Activated CD8-positive, alpha-beta memory T cell treated with anti-CD3 and anti-CD28 coated beads, Interleukin-2, amount 10 ng/mL, durations not matched to agents 7 days and 5 days (primary cell): ENCODE measurements at regions of chr1 and their contacts with region 1.

Region 1: GRCh38 chr1:150529017-150529416 is 13.5 kb downstream of the FALEC start:
- DNase-seq: no peak
- ATAC-seq: no peak
- H3K4me3 Mint-ChIP-seq: no peak overlapping the region
- H3K27ac Mint-ChIP-seq: no peak overlapping the region
- H3K4me1 Mint-ChIP-seq: no peaks in the 10 kb centered on the region
- H3K27me3 Mint-ChIP-seq: no peaks in the 10 kb centered on the region

Region 2: GRCh38 chr1:150321826-150322166 is 207.2 kb before region 1 on chr1:
- CTCF ChIA-PET with region 1: no interaction called
- DNase-seq: peak; percentile 41
- ATAC-seq: peak; percentile 3
- H3K4me3 Mint-ChIP-seq: peak overlapping the region; percentile 94
- H3K27ac Mint-ChIP-seq: peak overlapping the region; percentile 97
- H3K4me1 Mint-ChIP-seq: peaks cover 33% of the 10 kb centered on the region
- H3K27me3 Mint-ChIP-seq: no peaks in the 10 kb centered on the region

Region 3: DNA sequence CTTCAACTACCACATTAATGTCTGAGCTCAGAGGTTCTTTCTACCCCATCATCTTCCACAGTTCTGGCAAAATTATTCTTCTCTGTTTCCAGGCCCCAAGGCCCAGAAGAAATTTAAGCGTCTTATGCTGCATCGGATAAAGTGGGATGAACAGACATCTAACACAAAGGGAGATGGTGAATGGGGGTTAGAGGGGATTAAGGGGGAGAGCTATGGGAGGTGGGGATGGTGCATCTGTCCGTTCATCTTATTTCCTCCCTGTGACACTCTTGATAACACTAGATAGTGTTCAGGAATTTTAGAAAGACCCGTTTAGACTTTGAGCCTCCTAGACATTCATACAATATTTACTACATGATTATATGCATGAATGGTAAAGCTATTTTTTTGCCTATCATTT is 182.7 kb before region 1 on chr1:
- CTCF ChIA-PET with region 1: no interaction called
- DNase-seq: no peak
- ATAC-seq: no peak
- H3K4me3 Mint-ChIP-seq: no peak overlapping the region
- H3K27ac Mint-ChIP-seq: no peak overlapping the region
- H3K4me1 Mint-ChIP-seq: no peaks in the 10 kb centered on the region
- H3K27me3 Mint-ChIP-seq: no peaks in the 10 kb centered on the region

Region 4: DNA sequence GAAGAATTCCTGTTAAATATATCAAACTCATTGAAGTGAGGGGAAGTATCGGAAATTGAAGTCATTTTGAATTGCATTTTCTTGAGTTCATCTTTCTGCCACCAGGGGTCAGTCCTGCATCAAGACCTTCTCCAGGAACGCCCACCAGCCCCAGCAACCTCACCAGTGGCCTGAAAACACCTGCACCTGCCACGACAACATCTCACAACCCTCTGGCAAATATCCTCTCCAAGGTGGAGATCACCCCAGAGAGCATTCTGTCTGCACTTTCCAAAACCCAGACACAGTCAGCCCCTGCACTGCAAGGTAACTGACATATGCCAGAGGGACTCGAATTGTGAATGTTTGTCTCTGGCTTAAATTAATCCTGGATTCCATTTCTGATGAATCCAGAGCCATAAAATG is 64.6 kb before region 1 on chr1:
- CTCF ChIA-PET with region 1: interaction called, 14 read pairs
- DNase-seq: peak; percentile 74
- ATAC-seq: peak; percentile 76
- H3K4me3 Mint-ChIP-seq: no peak overlapping the region
- H3K27ac Mint-ChIP-seq: no peak overlapping the region
- H3K4me1 Mint-ChIP-seq: peaks cover 4% of the 10 kb centered on the region
- H3K27me3 Mint-ChIP-seq: no peaks in the 10 kb centered on the region

Region 5: GRCh38 chr1:150486964-150487762 is 41.9 kb before region 1 on chr1 and contains the start of gene TARS2:
- CTCF ChIA-PET with region 1: interaction called, 10 read pairs
- DNase-seq: peak; percentile 98
- ATAC-seq: peak; percentile 100
- H3K4me3 Mint-ChIP-seq: peak within 1 kb of the TSS; percentile 90
- H3K27ac Mint-ChIP-seq: peak within 1 kb of the TSS; percentile 99
- H3K4me1 Mint-ChIP-seq: peaks cover 22% of the 10 kb centered on the region
- H3K27me3 Mint-ChIP-seq: no peaks in the 10 kb centered on the region
- total RNA-seq, gene TARS2: 51.0 to 51.8 TPM